Calu3 (cell line): ENCODE measurements at regions of chr11 and their contacts with region 1.

Region 1: GRCh38 chr11:64148200-64148916 is 17.6 kb downstream of the MACROD1 start:
- DNase-seq: peak; percentile 84
- H3K4me3 Mint-ChIP-seq: no peak overlapping the region
- H3K27ac Mint-ChIP-seq: no peak overlapping the region
- H3K4me1 Mint-ChIP-seq: peaks cover 7% of the 10 kb centered on the region
- H3K27me3 Mint-ChIP-seq: no peaks in the 10 kb centered on the region
- CTCF ChIP-seq: peak; percentile 88

Region 2: GRCh38 chr11:64040684-64041322 is 107.6 kb before region 1 on chr11:
- CTCF ChIA-PET with region 1: interaction called, 3 read pairs
- intact Hi-C with region 1: loop called (anchors 10 kb)
- DNase-seq: peak; percentile 70
- H3K4me3 Mint-ChIP-seq: no peak overlapping the region
- H3K27ac Mint-ChIP-seq: no peak overlapping the region
- H3K4me1 Mint-ChIP-seq: no peaks in the 10 kb centered on the region
- H3K27me3 Mint-ChIP-seq: peaks cover under 1% of the 10 kb centered on the region
- CTCF ChIP-seq: peak; percentile 46

Region 3: GRCh38 chr11:64094463-64095260 is 53.7 kb before region 1 on chr11:
- CTCF ChIA-PET with region 1: no interaction called
- intact Hi-C with region 1: no loop called
- DNase-seq: peak; percentile 81
- H3K4me3 Mint-ChIP-seq: no peak overlapping the region
- H3K27ac Mint-ChIP-seq: no peak overlapping the region
- H3K4me1 Mint-ChIP-seq: peaks cover 27% of the 10 kb centered on the region
- H3K27me3 Mint-ChIP-seq: peaks cover 11% of the 10 kb centered on the region
- CTCF ChIP-seq: no peak